CD8-positive, alpha-beta T cell (primary cell): ENCODE measurements at regions of chr10 and their contacts with region 1.

Region 1: DNA sequence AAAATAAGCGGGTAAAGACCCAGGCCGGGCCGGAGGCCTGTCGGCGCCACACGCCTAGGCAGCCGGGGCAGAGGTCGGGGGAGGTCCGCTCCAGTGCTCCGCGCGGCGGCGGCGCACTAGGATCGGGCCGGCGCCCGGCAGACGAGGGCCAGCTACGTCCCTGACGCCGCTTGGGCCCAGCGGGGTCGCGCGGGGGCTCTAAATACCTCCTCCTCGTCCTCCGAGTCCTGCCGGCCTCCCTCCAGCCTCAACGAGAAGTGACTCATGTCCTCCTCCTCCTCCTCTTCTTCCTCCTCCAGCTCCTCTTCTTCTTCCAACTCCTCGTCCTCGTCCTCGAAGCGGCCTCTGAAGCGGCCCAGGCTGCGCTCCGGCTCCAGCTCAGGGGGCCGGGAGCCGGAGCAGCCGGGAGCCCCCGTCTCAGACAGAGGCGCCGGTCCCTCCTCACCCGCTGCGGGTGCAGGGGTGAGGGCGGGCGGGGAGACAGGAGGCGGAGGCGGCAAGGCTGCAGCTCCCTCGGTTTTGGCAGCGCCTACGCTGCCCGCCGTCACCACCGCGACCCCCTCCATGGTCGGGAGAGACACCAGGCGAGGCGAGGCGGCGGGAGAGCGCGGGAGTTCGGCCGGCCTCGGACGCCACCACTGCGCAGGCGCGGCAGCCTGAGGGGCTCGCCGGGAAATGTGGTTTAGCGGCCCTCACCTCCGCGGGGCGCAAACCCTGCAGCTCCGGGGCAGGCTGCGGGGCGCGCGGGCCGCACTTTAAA is at the start of gene PCGF6:
- DNase-seq: peak; percentile 31 to 85 (median 70)
- ATAC-seq: peak; percentile 86
- H3K4me3 ChIP-seq: peak within 1 kb of the TSS; percentile 69 to 80
- H3K4me3 Mint-ChIP-seq: peak within 1 kb of the TSS; percentile 88
- H3K27ac ChIP-seq: peak within 1 kb of the TSS; percentile 34 to 46
- H3K27ac Mint-ChIP-seq: peak within 1 kb of the TSS; percentile 88
- H3K4me1 ChIP-seq: peaks cover 5% of the 10 kb centered on the region
- H3K4me1 Mint-ChIP-seq: peaks cover 14% of the 10 kb centered on the region
- H3K27me3 ChIP-seq: no peaks in the 10 kb centered on the region
- H3K27me3 Mint-ChIP-seq: no peaks in the 10 kb centered on the region
- CTCF ChIP-seq: no peak
- total RNA-seq, gene PCGF6: 1.7 to 2.1 TPM

Region 2: DNA sequence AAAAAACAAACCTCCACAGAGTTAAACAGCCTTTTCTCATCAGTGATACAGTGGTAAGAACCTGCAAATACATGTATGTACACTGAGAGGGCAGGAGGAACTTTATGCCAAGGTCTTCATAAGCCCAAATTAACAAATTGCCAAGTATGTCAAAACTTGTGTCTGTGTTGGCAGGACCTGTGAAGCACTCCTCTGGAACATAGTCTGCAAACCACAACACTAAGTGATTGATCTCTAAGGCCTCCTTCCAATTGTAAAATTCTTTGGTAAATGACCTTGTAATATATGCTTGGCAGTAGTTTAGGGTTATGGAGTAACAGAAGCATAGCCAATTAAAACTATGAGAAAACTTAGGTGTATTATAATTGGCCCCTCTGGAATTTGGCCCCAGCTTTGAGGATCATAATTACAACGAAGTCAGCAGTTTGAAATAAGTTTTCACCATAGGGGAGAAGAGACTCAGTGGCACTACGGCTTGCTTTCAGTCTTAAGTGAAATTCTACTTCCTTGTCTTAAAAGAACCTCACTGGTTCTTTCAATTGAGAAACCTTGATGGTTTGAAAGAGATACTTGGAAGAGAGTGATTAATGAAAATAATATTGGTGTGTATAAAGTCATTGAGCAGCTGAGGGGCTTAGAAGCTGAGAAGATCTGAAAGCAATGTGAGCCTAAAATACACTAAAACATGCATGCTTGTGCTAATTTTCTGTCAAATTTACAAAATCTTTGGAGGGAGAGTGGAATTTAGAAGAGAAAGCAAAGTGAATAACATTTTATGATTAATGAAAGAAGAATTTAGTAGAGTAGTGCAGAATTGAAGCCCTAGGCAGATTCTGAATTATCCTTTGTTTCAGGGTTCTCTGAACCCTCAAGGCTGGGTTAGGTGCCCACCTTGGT is 374.9 kb before region 1 on chr10:
- CTCF ChIA-PET with region 1: no interaction called
- POLR2A ChIA-PET with region 1: no interaction called
- intact Hi-C with region 1: no loop called
- DNase-seq: no peak
- ATAC-seq: no peak
- H3K4me3 ChIP-seq: no peak overlapping the region
- H3K4me3 Mint-ChIP-seq: no peak overlapping the region
- H3K27ac ChIP-seq: no peak overlapping the region
- H3K27ac Mint-ChIP-seq: no peak overlapping the region
- H3K4me1 ChIP-seq: peaks cover 7% of the 10 kb centered on the region
- H3K4me1 Mint-ChIP-seq: peaks cover 18% of the 10 kb centered on the region
- H3K27me3 ChIP-seq: no peaks in the 10 kb centered on the region
- H3K27me3 Mint-ChIP-seq: no peaks in the 10 kb centered on the region
- CTCF ChIP-seq: no peak

Region 3: DNA sequence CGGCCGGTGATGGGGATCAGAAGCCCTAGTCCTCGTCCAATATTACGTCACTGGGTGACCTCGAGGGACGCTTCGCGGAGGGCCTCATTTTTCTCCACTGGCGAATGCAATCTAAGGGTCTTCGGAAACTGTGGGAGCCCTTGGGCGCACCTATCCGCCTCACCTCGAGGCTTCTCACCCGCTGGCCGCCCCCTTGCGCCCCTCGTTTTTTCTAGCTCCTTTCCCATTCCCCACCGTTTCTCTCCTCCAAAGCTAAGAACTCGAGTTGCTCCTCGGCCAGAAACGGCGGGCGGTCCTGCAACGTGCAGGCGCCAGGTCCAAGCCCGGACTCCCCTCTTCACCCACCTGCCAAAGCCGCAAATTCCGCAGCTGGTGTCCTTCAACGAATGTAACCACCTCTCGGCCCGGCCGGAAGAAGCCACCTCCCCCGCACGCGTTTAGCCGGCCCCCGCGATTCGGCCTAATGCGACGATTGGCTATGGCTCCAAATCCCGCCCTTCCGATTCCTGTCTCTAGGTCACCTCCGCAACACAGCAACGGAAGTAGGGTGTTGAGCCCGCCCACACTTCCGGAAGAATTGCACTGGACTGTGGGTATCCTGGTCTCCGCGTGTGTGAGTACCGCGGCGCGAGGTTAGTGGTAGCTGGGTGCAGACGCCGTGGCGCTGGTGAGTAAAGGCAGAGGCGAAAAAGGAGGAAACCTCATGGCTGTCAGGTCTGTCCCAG is 45.5 kb after region 1 on chr10 and contains the starts of genes ATP5MK and PDCD11:
- CTCF ChIA-PET with region 1: no interaction called
- POLR2A ChIA-PET with region 1: interaction called, 6 read pairs
- intact Hi-C with region 1: loop called (anchors 1 to 5 kb)
- DNase-seq: peak; percentile 86 to 97 (median 94)
- ATAC-seq: peak; percentile 97
- H3K4me3 ChIP-seq: peak within 1 kb of the TSS; percentile 88 to 99
- H3K4me3 Mint-ChIP-seq: peak within 1 kb of the TSS; percentile 97
- H3K27ac ChIP-seq: peak within 1 kb of the TSS; percentile 66 to 69
- H3K27ac Mint-ChIP-seq: peak within 1 kb of the TSS; percentile 96
- H3K4me1 ChIP-seq: peaks cover 39% of the 10 kb centered on the region
- H3K4me1 Mint-ChIP-seq: peaks cover 64% of the 10 kb centered on the region
- H3K27me3 ChIP-seq: no peaks in the 10 kb centered on the region
- H3K27me3 Mint-ChIP-seq: no peaks in the 10 kb centered on the region
- CTCF ChIP-seq: no peak
- total RNA-seq, gene ATP5MK: 93.4 to 97.3 TPM
- total RNA-seq, gene PDCD11: 13.7 to 15.0 TPM

Region 4: DNA sequence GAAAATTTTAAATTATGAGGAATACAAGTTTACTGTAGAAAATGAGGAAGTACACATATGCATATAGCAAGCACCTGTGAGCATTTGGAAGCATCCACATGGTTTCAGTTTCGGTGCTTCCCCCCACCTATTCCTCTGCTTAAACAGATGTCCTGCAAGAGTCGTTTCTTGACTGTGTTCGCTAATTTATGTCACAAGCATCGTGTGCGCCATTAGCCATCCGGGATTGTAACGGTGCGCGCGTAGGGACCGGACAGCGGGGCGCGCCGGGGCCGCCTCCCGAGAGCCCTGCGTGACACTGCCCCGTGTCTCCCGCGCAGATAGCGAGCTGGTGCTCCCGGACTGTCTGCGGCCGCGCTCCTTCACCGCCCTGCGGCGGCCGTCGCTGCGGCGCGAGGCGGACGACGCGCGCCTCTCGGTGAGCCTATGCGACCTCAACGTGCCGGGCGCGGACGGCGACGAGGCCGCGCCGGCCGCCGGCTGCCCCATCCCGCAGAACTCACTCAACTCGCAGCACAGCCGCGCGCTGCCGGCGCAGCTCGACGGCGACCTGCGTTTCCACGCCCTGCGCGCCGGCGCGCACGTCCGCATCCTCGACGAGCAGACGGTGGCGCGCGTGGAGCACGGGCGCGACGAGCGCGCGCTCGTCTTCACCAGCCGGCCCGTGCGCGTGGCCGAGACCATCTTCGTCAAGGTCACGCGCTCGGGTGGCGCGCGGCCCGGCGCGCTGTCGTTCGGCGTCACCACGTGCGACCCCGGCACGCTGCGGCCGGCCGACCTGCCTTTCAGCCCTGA is 233.7 kb after region 1 on chr10:
- CTCF ChIA-PET with region 1: no interaction called
- POLR2A ChIA-PET with region 1: no interaction called
- intact Hi-C with region 1: no loop called
- DNase-seq: peak; percentile 40 to 93 (median 70)
- ATAC-seq: peak; percentile 76
- H3K4me3 ChIP-seq: peak overlapping the region; percentile 73 to 76
- H3K4me3 Mint-ChIP-seq: peak overlapping the region; percentile 84
- H3K27ac ChIP-seq: peak overlapping the region; percentile 65 to 78
- H3K27ac Mint-ChIP-seq: peak overlapping the region; percentile 93
- H3K4me1 ChIP-seq: peaks cover 11% of the 10 kb centered on the region
- H3K4me1 Mint-ChIP-seq: peaks cover 17% of the 10 kb centered on the region
- H3K27me3 ChIP-seq: peaks cover 0 to 3% of the 10 kb centered on the region in 2 experiments
- H3K27me3 Mint-ChIP-seq: no peaks in the 10 kb centered on the region
- CTCF ChIP-seq: no peak